MCF 10A (cell line): ENCODE measurements at regions of chr20 and their contacts with region 1.

Region 1: DNA sequence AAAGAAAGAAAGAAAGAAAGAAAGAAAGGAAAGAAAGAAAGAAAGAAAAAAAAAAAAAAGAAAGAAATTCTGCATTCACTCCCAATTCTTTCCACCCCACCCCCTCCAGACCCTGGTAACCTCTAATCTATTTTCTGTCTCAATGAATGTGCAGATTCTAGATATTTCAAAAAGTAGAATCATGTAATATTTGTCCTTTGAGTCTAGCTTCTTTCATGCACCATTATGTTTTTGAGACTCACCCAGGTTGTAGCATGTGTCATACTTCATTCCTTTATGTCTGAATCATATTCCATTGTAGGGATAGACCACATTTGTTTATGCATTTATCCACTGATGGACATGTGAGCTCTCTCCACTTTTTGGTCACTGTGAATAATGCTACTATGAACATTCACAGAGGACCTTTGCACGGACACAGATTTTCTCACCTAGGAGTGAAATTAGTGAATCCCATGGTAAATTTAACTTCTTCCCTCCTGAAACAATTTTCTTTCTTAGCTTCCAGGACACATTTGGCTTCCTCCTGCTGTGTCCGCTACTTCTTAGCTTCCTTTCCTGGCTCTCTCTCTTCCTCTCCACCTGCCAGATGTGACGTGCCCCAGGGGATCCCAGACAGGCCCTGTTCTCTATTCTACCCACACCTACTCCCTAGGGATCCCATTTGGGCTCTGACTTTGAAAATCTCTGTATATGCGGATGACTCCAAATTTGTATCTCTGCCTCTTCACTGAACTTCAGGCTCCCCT is 24.1 kb upstream of the ARFGEF2 start:
- DNase-seq: peak; percentile 70
- H3K4me3 Mint-ChIP-seq: no peak overlapping the region
- H3K27ac Mint-ChIP-seq: peak overlapping the region; percentile 72
- H3K4me1 Mint-ChIP-seq: peaks cover 15% of the 10 kb centered on the region
- H3K27me3 Mint-ChIP-seq: peaks cover 15% of the 10 kb centered on the region
- CTCF ChIP-seq: no peak

Region 2: DNA sequence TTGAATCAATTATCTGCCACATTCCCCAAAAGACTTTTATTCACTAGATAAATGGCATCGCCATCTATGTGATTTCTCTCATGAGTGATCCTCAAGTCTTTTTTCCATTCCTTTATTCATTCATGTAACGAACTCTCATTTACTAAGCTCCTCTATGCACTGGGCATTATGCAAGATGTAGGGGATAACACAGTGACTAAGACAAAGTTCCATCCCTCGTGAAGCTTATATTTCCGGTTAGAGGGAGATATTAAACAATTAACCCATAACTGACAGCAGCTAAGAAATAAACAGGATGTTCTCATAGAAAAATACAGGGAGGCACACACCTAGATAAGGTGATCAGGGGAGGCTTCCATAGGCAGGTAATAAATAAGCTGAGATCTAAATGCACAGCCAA is 52.4 kb before region 1 on chr20:
- CTCF ChIA-PET with region 1: no interaction called
- POLR2A ChIA-PET with region 1: interaction called, 10 read pairs
- intact Hi-C with region 1: no loop called
- DNase-seq: peak; percentile 36
- H3K4me3 Mint-ChIP-seq: no peak overlapping the region
- H3K27ac Mint-ChIP-seq: no peak overlapping the region
- H3K4me1 Mint-ChIP-seq: peaks cover 17% of the 10 kb centered on the region
- H3K27me3 Mint-ChIP-seq: peaks cover 4% of the 10 kb centered on the region
- CTCF ChIP-seq: no peak